ENCODE measurements at regions of chr3 and their contacts with region 1.

Region 1: GRCh38 chr3:138082085-138082991 is 33.1 kb downstream of the DZIP1L start:
- DNase-seq: peak; percentile 93
- ATAC-seq: peak; percentile 59
- H3K4me3 ChIP-seq: peak overlapping the region; percentile 26
- H3K27ac ChIP-seq: peak overlapping the region; percentile 71
- H3K4me1 ChIP-seq: peaks cover 26% of the 10 kb centered on the region
- H3K27me3 ChIP-seq: no peaks in the 10 kb centered on the region
- CTCF ChIP-seq: no peak
- POLR2A ChIP-seq: no peak
- RAD21 ChIP-seq: no peak; the same call in 1 of the 2 replicates

Region 2: GRCh38 chr3:138118612-138119422 is 36.5 kb after region 1 on chr3:
- CTCF ChIA-PET with region 1: no interaction called
- POLR2A ChIA-PET with region 1: no interaction called
- dilution Hi-C with region 1: no loop called
- in situ Hi-C with region 1: no loop called
- intact Hi-C with region 1: loop called (anchors 5 kb)
- DNase-seq: peak; percentile 73
- ATAC-seq: peak; percentile 50
- H3K4me3 ChIP-seq: no peak overlapping the region
- H3K27ac ChIP-seq: no peak overlapping the region
- H3K4me1 ChIP-seq: no peaks in the 10 kb centered on the region; the same call in 1 of the 2 replicates
- H3K27me3 ChIP-seq: no peaks in the 10 kb centered on the region
- CTCF ChIP-seq: peak; percentile 89
- POLR2A ChIP-seq: no peak
- RAD21 ChIP-seq: peak; percentile 94